ENCODE measurements at regions of chr5 and their contacts with region 1.

Region 1: DNA sequence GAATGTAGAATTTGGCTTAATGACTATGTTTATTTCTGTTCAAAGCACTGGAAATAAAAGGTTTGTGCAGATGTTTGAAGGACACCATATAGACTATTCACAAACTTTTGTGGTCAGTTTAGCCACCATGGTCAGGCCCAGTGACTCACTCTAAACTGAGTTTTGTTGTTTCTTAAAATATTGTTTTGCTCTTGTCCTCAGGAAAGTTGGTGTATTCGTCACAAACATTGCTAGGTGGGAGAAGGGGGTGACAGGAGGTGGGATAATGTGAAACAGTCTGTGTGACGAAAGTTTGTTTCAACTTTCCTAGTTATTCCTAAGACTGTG is 35.0 kb upstream of the LIFR start:
- DNase-seq: no peak
- ATAC-seq: no peak
- H3K4me3 ChIP-seq: no peak overlapping the region
- H3K27ac ChIP-seq: peak overlapping the region; percentile 71 to 91 (median 84)
- H3K4me1 ChIP-seq: peaks cover 27 to 32% of the 10 kb centered on the region in 2 donors
- H3K27me3 ChIP-seq: no peaks in the 10 kb centered on the region
- CTCF ChIP-seq: no peak
- POLR2A ChIP-seq: no peak

Region 2: DNA sequence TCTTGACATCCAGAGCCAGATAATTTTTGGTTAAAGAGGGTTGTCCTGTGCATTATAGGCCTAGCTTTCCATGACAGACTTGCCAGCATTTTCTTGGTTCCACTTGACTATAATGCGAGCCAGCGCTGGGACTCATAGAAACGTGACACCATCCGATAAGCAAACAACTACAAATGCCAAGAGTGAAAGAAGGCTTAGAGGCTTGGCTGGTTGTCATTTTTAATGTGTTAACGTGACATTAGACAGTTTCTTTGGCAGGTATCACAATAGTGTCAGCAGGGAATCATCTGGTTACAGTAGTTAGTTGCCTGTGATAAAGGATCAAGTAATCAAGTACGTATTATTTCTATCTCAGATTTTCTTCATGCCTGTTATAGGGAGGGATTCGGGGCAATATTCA is 15.0 kb before region 1 on chr5:
- in situ Hi-C with region 1: no loop called
- intact Hi-C with region 1: loop called (anchors 2 kb)
- DNase-seq: peak in 1 of 2 donors; percentile 66
- ATAC-seq: peak; percentile 81 to 99
- H3K4me3 ChIP-seq: no peak overlapping the region
- H3K27ac ChIP-seq: peak overlapping the region; percentile 7 to 84 (median 66)
- H3K4me1 ChIP-seq: peaks cover 15 to 16% of the 10 kb centered on the region in 2 donors
- H3K27me3 ChIP-seq: no peaks in the 10 kb centered on the region
- CTCF ChIP-seq: no peak
- POLR2A ChIP-seq: no peak

Region 3: GRCh38 chr5:38905516-38905915 is 314.0 kb after region 1 on chr5:
- in situ Hi-C with region 1: no loop called
- intact Hi-C with region 1: no loop called
- DNase-seq: no peak
- ATAC-seq: no peak
- H3K4me3 ChIP-seq: no peak overlapping the region
- H3K27ac ChIP-seq: no peak overlapping the region
- H3K4me1 ChIP-seq: no peaks in the 10 kb centered on the region
- H3K27me3 ChIP-seq: no peaks in the 10 kb centered on the region
- CTCF ChIP-seq: no peak
- POLR2A ChIP-seq: no peak

Region 4: DNA sequence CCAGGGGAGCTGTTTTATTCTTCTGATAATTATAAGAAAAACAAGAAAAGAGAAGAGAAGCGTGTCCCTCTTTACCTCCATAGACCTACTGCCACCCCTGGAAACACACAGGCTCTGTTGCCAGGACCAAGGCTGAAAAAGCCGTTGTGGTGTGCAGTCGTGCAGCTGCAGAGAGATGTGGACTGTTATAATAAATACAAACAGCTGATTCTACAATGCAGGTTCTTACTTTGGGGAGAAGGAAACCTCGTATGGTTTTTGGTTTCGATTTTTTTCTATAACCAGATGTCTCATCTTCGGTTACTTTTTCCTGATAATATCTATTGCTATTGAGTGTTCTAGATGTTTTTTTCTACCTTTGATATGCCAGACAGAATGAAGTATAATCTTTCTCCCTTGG is 599.7 kb after region 1 on chr5:
- in situ Hi-C with region 1: no loop called
- intact Hi-C with region 1: no loop called
- DNase-seq: no peak
- ATAC-seq: no peak
- H3K4me3 ChIP-seq: no peak overlapping the region
- H3K27ac ChIP-seq: no peak overlapping the region
- H3K4me1 ChIP-seq: peaks cover 0 to 9% of the 10 kb centered on the region in 2 donors
- H3K27me3 ChIP-seq: no peaks in the 10 kb centered on the region
- CTCF ChIP-seq: no peak
- POLR2A ChIP-seq: no peak

Region 5: GRCh38 chr5:39399135-39400036 is 807.9 kb after region 1 on chr5:
- in situ Hi-C with region 1: no loop called
- intact Hi-C with region 1: no loop called
- DNase-seq: peak; percentile 21 to 41
- ATAC-seq: peak; percentile 93
- H3K4me3 ChIP-seq: no peak overlapping the region
- H3K27ac ChIP-seq: peak overlapping the region; percentile 69 to 75 (median 72)
- H3K4me1 ChIP-seq: peaks cover 0 to 14% of the 10 kb centered on the region in 2 donors
- H3K27me3 ChIP-seq: no peaks in the 10 kb centered on the region
- CTCF ChIP-seq: no peak
- POLR2A ChIP-seq: peak in 1 of 2 donors; percentile 34

Measured in gastrocnemius medialis (tissue), 4 donors.